CD4-positive, alpha-beta T cell (primary cell): ENCODE measurements at regions of chr11 and their contacts with region 1.

Region 1: GRCh38 chr11:69088676-69089146 is 40.0 kb downstream of the TPCN2 start:
- DNase-seq: peak; percentile 31 to 75 (median 42)
- ATAC-seq: peak; percentile 49
- H3K4me3 ChIP-seq: no peak overlapping the region
- H3K4me3 Mint-ChIP-seq: no peak overlapping the region
- H3K27ac ChIP-seq: no peak overlapping the region
- H3K27ac Mint-ChIP-seq: no peak overlapping the region
- H3K4me1 ChIP-seq: no peaks in the 10 kb centered on the region
- H3K4me1 Mint-ChIP-seq: no peaks in the 10 kb centered on the region
- H3K27me3 ChIP-seq: no peaks in the 10 kb centered on the region
- H3K27me3 Mint-ChIP-seq: no peaks in the 10 kb centered on the region
- CTCF ChIP-seq: peak; percentile 59

Region 2: DNA sequence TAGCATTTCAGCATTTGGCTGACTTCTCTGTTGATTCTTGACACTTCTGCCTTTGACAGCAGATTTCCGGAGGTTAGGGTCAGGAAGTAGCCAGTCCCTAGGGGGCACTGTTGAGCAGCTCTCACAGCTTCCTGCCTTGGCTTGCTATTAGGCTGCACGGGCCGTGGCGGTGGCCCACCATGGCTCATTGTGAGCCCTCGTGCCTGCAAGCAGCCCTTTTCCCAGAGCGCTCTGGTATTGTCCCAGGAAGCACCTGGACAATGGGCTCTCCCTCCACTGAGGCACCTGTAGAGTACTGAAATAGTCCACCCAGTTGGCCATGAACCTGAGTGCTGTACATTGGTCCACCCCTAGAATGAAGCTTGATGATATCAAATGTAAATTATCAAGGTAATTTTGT is 504.6 kb before region 1 on chr11:
- CTCF ChIA-PET with region 1: no interaction called
- POLR2A ChIA-PET with region 1: no interaction called
- intact Hi-C with region 1: loop called (anchors 2 to 5 kb)
- DNase-seq: peak; percentile 28 to 74 (median 46)
- ATAC-seq: peak; percentile 72
- H3K4me3 ChIP-seq: no peak overlapping the region
- H3K4me3 Mint-ChIP-seq: no peak overlapping the region
- H3K27ac ChIP-seq: no peak overlapping the region
- H3K27ac Mint-ChIP-seq: no peak overlapping the region
- H3K4me1 ChIP-seq: no peaks in the 10 kb centered on the region
- H3K4me1 Mint-ChIP-seq: peaks cover 14% of the 10 kb centered on the region
- H3K27me3 ChIP-seq: no peaks in the 10 kb centered on the region
- H3K27me3 Mint-ChIP-seq: no peaks in the 10 kb centered on the region
- CTCF ChIP-seq: peak; percentile 74

Region 3: DNA sequence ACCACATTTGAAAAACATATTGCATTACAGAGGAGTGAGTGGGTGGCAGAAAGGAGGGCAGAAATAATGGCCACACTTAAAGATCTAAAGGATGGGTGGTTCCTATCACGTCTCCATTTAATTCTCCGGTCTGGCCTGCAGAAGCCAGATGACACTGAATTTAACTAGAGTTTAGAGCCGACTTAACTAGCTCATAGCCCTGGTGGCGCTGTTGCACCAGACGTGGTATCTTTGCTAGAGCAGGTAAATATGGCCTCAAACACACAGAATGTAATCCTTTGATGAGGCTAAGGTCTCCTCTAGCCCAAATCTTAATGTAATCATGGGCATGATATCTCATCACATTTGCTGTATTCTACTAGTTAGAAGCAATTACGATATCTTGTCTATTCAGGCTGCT is 455.9 kb before region 1 on chr11:
- CTCF ChIA-PET with region 1: no interaction called
- POLR2A ChIA-PET with region 1: no interaction called
- intact Hi-C with region 1: loop called in 1 of 2 experiments (anchors 2 kb)
- DNase-seq: peak in 12 of 14 experiments; percentile 26 to 71 (median 36)
- ATAC-seq: peak; percentile 48
- H3K4me3 ChIP-seq: no peak overlapping the region
- H3K4me3 Mint-ChIP-seq: no peak overlapping the region
- H3K27ac ChIP-seq: no peak overlapping the region
- H3K27ac Mint-ChIP-seq: no peak overlapping the region
- H3K4me1 ChIP-seq: no peaks in the 10 kb centered on the region
- H3K4me1 Mint-ChIP-seq: no peaks in the 10 kb centered on the region
- H3K27me3 ChIP-seq: no peaks in the 10 kb centered on the region
- H3K27me3 Mint-ChIP-seq: peaks cover 9% of the 10 kb centered on the region
- CTCF ChIP-seq: peak; percentile 25

Region 4: GRCh38 chr11:68903288-68904247 is 185.1 kb before region 1 on chr11 and contains the starts of genes IGHMBP2 and MRPL21:
- CTCF ChIA-PET with region 1: no interaction called
- POLR2A ChIA-PET with region 1: no interaction called
- intact Hi-C with region 1: loop called in 1 of 2 experiments (anchors 5 kb)
- DNase-seq: peak; percentile 71 to 93 (median 82)
- ATAC-seq: peak; percentile 92
- H3K4me3 ChIP-seq: peak within 1 kb of the TSS; percentile 95
- H3K4me3 Mint-ChIP-seq: peak within 1 kb of the TSS; percentile 98
- H3K27ac ChIP-seq: peak within 1 kb of the TSS; percentile 57 to 67
- H3K27ac Mint-ChIP-seq: peak within 1 kb of the TSS; percentile 92
- H3K4me1 ChIP-seq: peaks cover 31% of the 10 kb centered on the region
- H3K4me1 Mint-ChIP-seq: peaks cover 50% of the 10 kb centered on the region
- H3K27me3 ChIP-seq: no peaks in the 10 kb centered on the region
- H3K27me3 Mint-ChIP-seq: no peaks in the 10 kb centered on the region
- CTCF ChIP-seq: no peak
- total RNA-seq, gene IGHMBP2: 17.5 to 18.5 TPM
- total RNA-seq, gene MRPL21: 47.5 to 48.0 TPM

Region 5: DNA sequence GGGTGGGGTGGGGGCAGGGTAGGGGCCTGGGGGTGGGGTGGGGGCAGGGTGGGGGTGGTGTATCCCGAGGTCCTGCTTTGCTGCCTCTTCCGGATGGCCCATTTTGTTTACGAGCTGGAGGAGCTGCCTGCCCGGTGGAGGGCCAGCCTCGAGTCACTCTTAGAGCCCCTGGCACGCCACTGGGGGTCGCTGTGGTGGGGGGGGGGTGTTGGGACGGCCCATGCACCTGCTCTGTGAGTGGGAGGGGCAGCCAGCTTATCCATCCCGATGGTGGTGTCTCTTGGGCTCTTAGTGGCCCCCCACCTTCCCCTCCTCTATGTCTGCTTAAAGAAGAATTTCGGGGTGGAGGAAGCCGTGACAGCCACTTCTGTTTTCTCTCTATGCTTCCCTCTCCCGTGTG is 132.6 kb before region 1 on chr11:
- CTCF ChIA-PET with region 1: no interaction called
- POLR2A ChIA-PET with region 1: no interaction called
- intact Hi-C with region 1: loop called in 1 of 2 experiments (anchors 5 kb)
- DNase-seq: peak in 11 of 14 experiments; percentile 4 to 61 (median 23)
- ATAC-seq: no peak
- H3K4me3 ChIP-seq: no peak overlapping the region
- H3K4me3 Mint-ChIP-seq: no peak overlapping the region
- H3K27ac ChIP-seq: no peak overlapping the region
- H3K27ac Mint-ChIP-seq: no peak overlapping the region
- H3K4me1 ChIP-seq: peaks cover 16% of the 10 kb centered on the region
- H3K4me1 Mint-ChIP-seq: no peaks in the 10 kb centered on the region
- H3K27me3 ChIP-seq: peaks cover 0 to 5% of the 10 kb centered on the region in 2 experiments
- H3K27me3 Mint-ChIP-seq: peaks cover 5% of the 10 kb centered on the region
- CTCF ChIP-seq: no peak

Region 6: DNA sequence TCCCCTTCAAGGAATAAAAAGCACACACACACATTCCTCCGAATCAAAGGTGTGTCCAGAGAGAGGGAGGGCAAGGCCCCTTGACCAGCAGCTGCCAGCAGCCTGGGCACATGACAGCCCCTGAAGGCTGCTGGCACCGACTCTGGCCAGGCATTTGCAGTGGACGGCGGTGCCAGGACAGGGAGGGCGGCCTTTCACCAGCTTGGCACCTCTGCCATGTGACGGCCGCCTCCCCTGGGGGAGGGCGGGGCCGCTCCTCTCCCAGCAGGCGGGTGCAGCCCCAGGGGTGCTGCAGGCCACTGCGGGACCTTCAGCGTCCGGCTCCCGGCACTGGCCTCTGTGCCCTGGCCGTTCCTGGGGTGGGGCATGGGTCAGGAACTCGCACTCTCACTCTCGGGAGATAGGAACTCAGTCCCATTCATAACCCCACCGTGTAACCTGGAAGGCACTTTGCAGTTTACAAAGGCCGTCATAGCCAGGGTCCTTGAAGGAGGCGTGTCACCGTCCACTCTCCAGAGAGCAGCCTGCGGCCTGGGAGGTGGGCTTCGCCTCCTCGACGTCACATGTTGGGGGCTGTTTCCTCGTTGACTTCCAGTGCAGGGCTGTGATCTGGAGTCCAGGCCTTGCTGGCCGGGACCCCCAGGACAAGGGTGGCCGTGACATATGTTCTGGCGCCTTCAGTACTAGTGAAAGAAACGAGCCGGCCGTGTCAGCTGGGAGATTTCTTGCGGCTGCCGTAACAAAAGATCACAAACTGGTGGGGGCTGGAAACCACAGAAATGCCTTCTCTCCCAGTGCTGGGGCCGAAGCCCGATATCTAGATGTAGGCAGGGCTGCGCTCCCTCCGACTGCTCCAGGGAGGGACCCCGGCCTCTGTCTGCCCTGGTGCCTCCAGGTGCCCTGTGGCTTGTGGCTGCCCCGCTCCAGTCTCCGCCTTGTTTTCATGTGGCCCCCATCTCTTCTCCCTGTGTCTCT is 27.2 kb after region 1 on chr11:
- CTCF ChIA-PET with region 1: no interaction called
- POLR2A ChIA-PET with region 1: no interaction called
- intact Hi-C with region 1: no loop called
- DNase-seq: no peak
- ATAC-seq: no peak
- H3K4me3 ChIP-seq: no peak overlapping the region
- H3K4me3 Mint-ChIP-seq: no peak overlapping the region
- H3K27ac ChIP-seq: no peak overlapping the region
- H3K27ac Mint-ChIP-seq: no peak overlapping the region
- H3K4me1 ChIP-seq: peaks cover 3% of the 10 kb centered on the region
- H3K4me1 Mint-ChIP-seq: peaks cover 16% of the 10 kb centered on the region
- H3K27me3 ChIP-seq: no peaks in the 10 kb centered on the region
- H3K27me3 Mint-ChIP-seq: no peaks in the 10 kb centered on the region
- CTCF ChIP-seq: no peak